K562 (cell line): ENCODE measurements at regions of chr15 and their contacts with region 1.

Region 1: DNA sequence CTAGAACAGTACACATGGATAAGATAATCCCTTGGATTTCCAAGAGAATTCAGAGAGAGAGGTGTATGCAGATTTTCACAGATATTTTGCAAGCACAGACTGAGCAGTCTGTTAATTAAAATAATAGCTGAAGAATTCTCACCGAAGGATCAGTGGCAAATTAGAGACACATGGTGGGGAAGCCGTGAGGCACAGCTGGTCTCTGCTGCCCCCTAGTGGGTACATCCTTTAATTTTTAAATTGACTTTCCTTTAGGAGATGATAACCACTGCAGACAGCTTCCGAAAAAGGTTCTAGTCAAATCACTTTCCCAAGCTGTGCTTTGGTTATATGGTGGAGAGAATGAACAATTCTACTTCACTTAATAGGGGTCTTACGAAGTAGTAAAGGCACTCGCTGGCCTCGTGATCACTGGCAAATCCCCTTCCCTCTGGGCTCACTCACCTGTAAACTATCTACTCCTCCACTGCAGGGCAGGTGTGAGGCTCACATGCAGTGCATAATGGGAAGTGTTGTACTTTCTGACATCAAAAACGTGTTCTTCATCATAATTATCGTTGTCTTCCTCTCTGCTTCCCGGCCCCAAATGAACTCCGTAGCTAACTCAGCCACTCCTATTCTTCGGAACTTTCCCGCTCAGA is 19.5 kb downstream of the MESD start:
- DNase-seq: peak; percentile 66 to 81 (median 70)
- ATAC-seq: peak; percentile 87
- H3K4me3 ChIP-seq: no peak overlapping the region
- H3K27ac ChIP-seq: no peak overlapping the region
- H3K4me1 ChIP-seq: no peaks in the 10 kb centered on the region
- H3K27me3 ChIP-seq: no peaks in the 10 kb centered on the region
- CTCF ChIP-seq: peak; percentile 79 to 95 (median 86)
- EP300 ChIP-seq: no peak
- POLR2A ChIP-seq: no peak
- RAD21 ChIP-seq: peak; percentile 87 to 92

Region 2: DNA sequence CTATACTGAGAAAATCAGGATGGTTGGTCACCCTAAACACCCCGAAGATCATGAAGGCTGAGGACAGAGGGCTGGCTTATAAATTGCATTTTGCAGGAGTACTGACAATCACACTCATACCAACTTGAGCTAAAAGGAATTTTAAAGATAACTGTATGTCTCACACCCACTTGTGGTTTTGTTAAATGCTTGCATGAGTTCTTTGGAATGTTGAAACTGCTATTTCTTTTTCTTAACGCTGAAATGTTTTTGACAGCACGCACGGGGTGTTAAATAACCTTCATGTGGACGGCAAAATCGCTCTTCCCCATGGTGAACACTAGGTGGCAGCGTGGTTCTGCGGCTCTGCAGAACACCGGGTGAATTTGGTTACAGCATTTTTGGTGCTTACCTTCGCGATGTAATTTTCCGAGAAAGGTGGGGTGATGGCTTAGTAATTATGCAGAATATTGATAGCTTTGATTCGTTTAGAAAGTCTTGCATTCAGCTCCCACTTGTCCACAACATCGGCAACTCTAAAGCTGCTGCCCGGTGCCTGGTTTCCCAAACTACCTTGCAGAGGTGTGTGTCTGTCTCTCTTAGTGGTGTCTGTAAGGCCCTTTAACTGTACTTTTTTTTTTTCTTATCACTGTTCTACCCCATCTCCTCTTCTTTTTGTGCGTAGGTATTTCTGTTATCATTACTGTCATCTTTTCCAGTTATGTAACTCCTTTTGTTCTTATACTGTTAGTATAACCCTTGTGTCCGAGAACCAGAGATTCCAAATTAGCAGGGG is 514.3 kb before region 1 on chr15:
- CTCF ChIA-PET with region 1: interaction called, 12 read pairs
- POLR2A ChIA-PET with region 1: no interaction called
- in situ Hi-C with region 1: loop called (anchors 5 kb)
- intact Hi-C with region 1: loop called (anchors 2 kb)
- DNase-seq: peak; percentile 69 to 71 (median 71)
- ATAC-seq: peak; percentile 87
- H3K4me3 ChIP-seq: no peak overlapping the region
- H3K27ac ChIP-seq: no peak overlapping the region
- H3K4me1 ChIP-seq: no peaks in the 10 kb centered on the region
- H3K27me3 ChIP-seq: peaks cover 0 to 25% of the 10 kb centered on the region in 2 experiments; a peak in 2 of 5 replicates
- CTCF ChIP-seq: peak; percentile 86 to 95 (median 92)
- EP300 ChIP-seq: no peak
- POLR2A ChIP-seq: no peak
- RAD21 ChIP-seq: peak; percentile 82 to 86

Region 3: DNA sequence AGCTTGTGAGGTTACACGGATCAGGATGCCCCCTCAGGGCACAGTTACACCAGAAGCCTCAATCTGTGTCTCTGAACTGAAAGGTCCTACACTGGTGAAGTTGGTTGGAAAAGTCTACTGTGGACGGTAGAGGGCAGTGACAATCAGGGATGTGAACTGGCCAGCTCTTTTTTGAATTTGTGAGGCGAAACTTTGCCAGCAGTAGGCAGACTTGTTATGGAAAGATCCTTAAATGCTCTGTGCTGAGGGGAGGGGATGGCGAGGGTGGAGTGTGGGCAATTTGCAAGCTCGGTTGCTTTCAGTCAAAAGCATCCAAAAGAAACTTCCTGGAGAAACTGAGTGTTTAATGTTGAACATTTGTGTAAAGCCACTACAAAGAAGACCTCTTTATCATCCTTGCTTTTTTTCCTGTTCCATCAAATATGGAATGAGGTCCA is 402.4 kb before region 1 on chr15:
- CTCF ChIA-PET with region 1: no interaction called
- POLR2A ChIA-PET with region 1: no interaction called
- in situ Hi-C with region 1: no loop called
- intact Hi-C with region 1: loop called (anchors 1 kb)
- DNase-seq: peak; percentile 22 to 56 (median 40)
- ATAC-seq: peak; percentile 86
- H3K4me3 ChIP-seq: no peak overlapping the region
- H3K27ac ChIP-seq: no peak overlapping the region
- H3K4me1 ChIP-seq: no peaks in the 10 kb centered on the region
- H3K27me3 ChIP-seq: peaks cover 4 to 40% of the 10 kb centered on the region in 2 experiments; a peak in 3 of 5 replicates
- CTCF ChIP-seq: peak; percentile 61 to 93 (median 89)
- EP300 ChIP-seq: no peak
- POLR2A ChIP-seq: no peak
- RAD21 ChIP-seq: peak; percentile 65 to 78